Colonic mucosa (tissue), 4 donors: ENCODE measurements at regions of chr1 and their contacts with region 1.

Region 1: DNA sequence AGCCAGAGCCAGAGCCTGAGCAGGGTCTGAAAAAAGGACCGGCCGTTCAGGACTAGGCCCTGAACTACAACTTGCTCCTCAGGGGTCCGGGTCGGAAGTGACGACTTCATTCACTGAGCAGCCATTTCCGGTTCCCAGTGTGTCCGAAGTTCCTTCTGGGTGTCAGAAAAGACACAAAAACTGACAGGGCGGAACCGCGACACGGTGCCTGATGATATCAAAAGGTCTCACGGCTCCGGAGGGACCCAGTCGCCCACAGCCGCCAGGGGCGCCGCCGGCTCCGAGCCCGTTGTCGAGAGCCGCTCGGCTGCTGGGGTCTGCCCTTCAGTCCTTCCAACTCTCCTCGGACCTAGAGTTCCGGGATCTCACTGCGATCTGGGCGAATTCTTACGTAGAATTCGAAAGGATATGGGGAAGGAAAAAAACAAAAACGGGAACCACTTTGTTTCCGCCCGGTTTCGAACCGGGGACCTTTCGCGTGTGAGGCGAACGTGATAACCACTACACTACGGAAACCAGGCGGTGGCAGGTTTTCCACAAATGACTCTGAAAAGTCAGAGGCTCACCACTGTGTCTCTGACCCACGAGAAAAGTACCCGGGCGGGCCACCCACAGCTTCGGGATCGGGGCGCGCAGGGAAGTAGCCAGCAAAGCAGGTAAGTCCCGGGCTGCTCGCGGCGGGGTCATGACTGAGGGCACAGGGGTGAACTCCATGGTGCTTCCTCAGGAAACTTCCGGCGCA is 31.8 kb upstream of the CFAP126 start:
- DNase-seq: peak; percentile 93
- H3K4me3 ChIP-seq: peak overlapping the region; percentile 79
- H3K27ac ChIP-seq: peak overlapping the region; percentile 100
- H3K4me1 ChIP-seq: no peaks in the 10 kb centered on the region
- H3K27me3 ChIP-seq: no peaks in the 10 kb centered on the region
- CTCF ChIP-seq: peak; percentile 31

Region 2: GRCh38 chr1:161305867-161306519 is 93.4 kb before region 1 on chr1:
- intact Hi-C with region 1: no loop called
- DNase-seq: peak; percentile 90
- H3K4me3 ChIP-seq: peak overlapping the region; percentile 63
- H3K27ac ChIP-seq: peak overlapping the region; percentile 27
- H3K4me1 ChIP-seq: no peaks in the 10 kb centered on the region
- H3K27me3 ChIP-seq: no peaks in the 10 kb centered on the region
- CTCF ChIP-seq: no peak

Region 3: GRCh38 chr1:161531986-161532643 is 132.7 kb after region 1 on chr1:
- intact Hi-C with region 1: loop called (anchors 10 kb)
- DNase-seq: no peak
- H3K4me3 ChIP-seq: no peak overlapping the region
- H3K27ac ChIP-seq: peak overlapping the region; percentile 50
- H3K4me1 ChIP-seq: peaks cover 3% of the 10 kb centered on the region
- H3K27me3 ChIP-seq: no peaks in the 10 kb centered on the region
- CTCF ChIP-seq: no peak